Transverse colon (tissue), 4 donors: ENCODE measurements at regions of chr6 and their contacts with region 1.

Region 1: DNA sequence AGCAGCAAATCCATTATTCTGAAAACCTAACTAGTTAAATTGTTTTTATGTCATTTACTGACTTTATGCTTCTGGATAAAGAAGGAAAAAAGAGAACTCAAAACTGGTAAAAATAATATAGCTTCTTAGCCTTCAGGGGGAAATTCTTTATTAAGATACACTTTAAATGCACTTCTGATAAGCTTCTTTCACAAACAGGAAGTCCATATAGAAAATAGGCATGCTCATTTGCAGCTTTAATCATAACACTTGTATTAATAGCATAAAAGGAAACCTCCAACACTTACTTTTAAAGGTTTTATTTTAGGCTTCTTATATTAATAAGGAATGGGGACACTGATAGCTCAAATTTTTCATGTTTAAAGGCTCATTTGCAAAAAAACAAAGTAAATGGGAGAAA is 538.0 kb upstream of the SLC35B3 start:
- DNase-seq: no peak
- H3K4me3 ChIP-seq: no peak overlapping the region
- H3K27ac ChIP-seq: no peak overlapping the region
- H3K4me1 ChIP-seq: no peaks in the 10 kb centered on the region
- H3K27me3 ChIP-seq: no peaks in the 10 kb centered on the region
- CTCF ChIP-seq: no peak
- EP300 ChIP-seq: no peak
- POLR2A ChIP-seq: no peak

Region 2: DNA sequence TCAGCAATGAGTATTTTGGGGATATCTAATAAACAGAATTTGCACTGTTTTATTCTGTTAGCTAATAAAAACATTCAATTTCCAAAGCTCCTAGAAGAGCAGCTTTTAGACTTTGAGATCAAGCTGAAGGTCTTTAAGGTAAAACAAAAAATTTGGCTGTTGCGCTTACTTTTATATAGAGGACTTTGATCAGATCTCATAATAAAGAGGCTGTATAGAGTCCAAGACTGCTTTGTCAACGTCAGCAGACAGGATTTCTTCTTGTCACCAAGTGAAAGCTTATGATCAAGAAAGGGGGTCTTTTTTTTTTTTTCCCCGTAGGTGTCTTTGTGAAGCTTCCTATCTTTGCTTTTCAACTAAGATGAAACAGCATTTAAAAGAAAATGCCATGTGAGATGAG is 18.4 kb after region 1 on chr6:
- in situ Hi-C with region 1: no loop called
- intact Hi-C with region 1: loop called (anchors 1 kb)
- DNase-seq: no peak
- H3K4me3 ChIP-seq: no peak overlapping the region
- H3K27ac ChIP-seq: no peak overlapping the region
- H3K4me1 ChIP-seq: peaks cover 0 to 14% (median 6%) of the 10 kb centered on the region in 4 donors
- H3K27me3 ChIP-seq: no peaks in the 10 kb centered on the region
- CTCF ChIP-seq: no peak
- EP300 ChIP-seq: no peak
- POLR2A ChIP-seq: no peak

Region 3: DNA sequence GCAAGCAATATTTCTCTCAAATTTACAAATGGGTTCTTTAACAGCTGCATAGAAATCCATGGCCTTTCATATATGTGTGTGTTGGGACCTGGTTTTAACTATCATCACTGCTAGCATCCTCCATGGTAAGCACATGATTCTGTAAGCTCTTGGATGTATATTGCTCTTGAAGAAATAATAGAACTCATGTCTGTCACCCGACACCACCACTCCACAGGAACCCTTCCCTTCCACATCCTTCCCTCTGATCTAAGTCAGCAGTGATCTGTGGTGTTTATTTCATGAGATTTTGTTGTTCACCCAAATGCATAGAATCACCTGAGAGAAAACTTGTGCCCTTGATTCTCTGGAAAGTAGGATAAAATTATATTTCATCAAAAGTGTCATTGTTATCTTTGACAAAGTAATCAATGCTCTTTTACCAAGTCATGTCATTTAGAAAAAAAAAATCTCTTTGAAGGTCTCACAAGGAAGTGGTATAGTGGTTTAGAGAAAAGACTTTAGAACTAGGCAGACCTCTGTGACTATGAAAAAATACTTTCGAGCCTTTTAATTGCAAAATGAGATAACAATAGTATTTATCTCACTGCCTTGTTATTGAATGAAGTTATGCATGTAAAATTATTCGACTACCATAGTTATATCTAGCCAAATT is 111.8 kb after region 1 on chr6:
- in situ Hi-C with region 1: no loop called
- intact Hi-C with region 1: no loop called
- DNase-seq: no peak
- H3K4me3 ChIP-seq: no peak overlapping the region
- H3K27ac ChIP-seq: no peak overlapping the region
- H3K4me1 ChIP-seq: no peaks in the 10 kb centered on the region
- H3K27me3 ChIP-seq: no peaks in the 10 kb centered on the region
- CTCF ChIP-seq: no peak
- EP300 ChIP-seq: no peak
- POLR2A ChIP-seq: no peak

Region 4: DNA sequence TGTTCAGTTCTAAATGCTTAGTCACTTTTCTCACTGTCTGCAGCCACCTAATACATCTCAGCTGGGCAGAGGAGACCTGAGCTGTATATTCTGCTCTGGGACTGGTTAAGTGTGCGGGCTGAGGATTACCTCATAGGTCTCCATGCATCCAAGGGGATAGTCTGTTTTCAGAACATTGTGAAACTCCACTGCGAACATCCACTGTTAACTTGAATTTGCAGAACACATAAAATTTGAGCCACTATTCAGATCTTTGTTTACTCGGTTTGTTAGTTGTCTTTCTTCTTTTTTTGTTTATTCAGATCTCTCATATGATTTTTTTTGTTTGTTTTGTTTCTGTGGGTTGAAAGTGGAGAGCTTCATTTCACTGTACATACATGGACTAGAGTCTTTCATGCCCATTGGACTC is 494.4 kb after region 1 on chr6:
- in situ Hi-C with region 1: no loop called
- intact Hi-C with region 1: no loop called
- DNase-seq: no peak
- H3K4me3 ChIP-seq: no peak overlapping the region
- H3K27ac ChIP-seq: no peak overlapping the region
- H3K4me1 ChIP-seq: no peaks in the 10 kb centered on the region
- H3K27me3 ChIP-seq: no peaks in the 10 kb centered on the region
- CTCF ChIP-seq: no peak
- EP300 ChIP-seq: no peak
- POLR2A ChIP-seq: no peak